ENCODE measurements at regions of chr4 and their contacts with region 1.

Region 1: GRCh38 chr4:102620697-102621497 is 119.7 kb downstream of the NFKB1 start:
- DNase-seq: no peak
- H3K4me3 ChIP-seq: no peak overlapping the region
- H3K4me3 Mint-ChIP-seq: no peak overlapping the region
- H3K27ac ChIP-seq: no peak overlapping the region
- H3K27ac Mint-ChIP-seq: peak overlapping the region in 5 of 8 donors; percentile 40 to 78 (median 70)
- H3K4me1 ChIP-seq: peaks cover 10% of the 10 kb centered on the region
- H3K4me1 Mint-ChIP-seq: peaks cover 11 to 46% (median 32%) of the 10 kb centered on the region in 3 donors
- H3K27me3 ChIP-seq: no peaks in the 10 kb centered on the region
- H3K27me3 Mint-ChIP-seq: no peaks in the 10 kb centered on the region

Region 2: GRCh38 chr4:102449751-102450352 is 171.0 kb before region 1 on chr4:
- CTCF ChIA-PET with region 1: interaction called, 14 read pairs
- POLR2A ChIA-PET with region 1: no interaction called
- DNase-seq: peak; percentile 7 to 63 (median 55)
- H3K4me3 ChIP-seq: no peak overlapping the region
- H3K4me3 Mint-ChIP-seq: no peak overlapping the region
- H3K27ac ChIP-seq: no peak overlapping the region
- H3K27ac Mint-ChIP-seq: peak overlapping the region in 1 of 8 donors; percentile 9
- H3K4me1 ChIP-seq: no peaks in the 10 kb centered on the region
- H3K4me1 Mint-ChIP-seq: peaks cover 9 to 20% (median 13%) of the 10 kb centered on the region in 3 donors
- H3K27me3 ChIP-seq: no peaks in the 10 kb centered on the region
- H3K27me3 Mint-ChIP-seq: no peaks in the 10 kb centered on the region